ENCODE measurements at regions of chr20 and their contacts with region 1.

Region 1: GRCh38 chr20:60210779-60211617 is 252.8 kb downstream of the CDH26 start:
- DNase-seq: peak; percentile 49
- H3K4me3 ChIP-seq: no peak overlapping the region
- H3K27ac ChIP-seq: no peak overlapping the region
- H3K4me1 ChIP-seq: no peaks in the 10 kb centered on the region
- H3K27me3 ChIP-seq: no peaks in the 10 kb centered on the region
- CTCF ChIP-seq: peak; percentile 74

Region 2: GRCh38 chr20:60362531-60363170 is 151.7 kb after region 1 on chr20:
- intact Hi-C with region 1: loop called (anchors 5 kb)
- DNase-seq: no peak
- H3K4me3 ChIP-seq: no peak overlapping the region
- H3K27ac ChIP-seq: no peak overlapping the region
- H3K4me1 ChIP-seq: no peaks in the 10 kb centered on the region
- H3K27me3 ChIP-seq: no peaks in the 10 kb centered on the region
- CTCF ChIP-seq: no peak

Region 3: DNA sequence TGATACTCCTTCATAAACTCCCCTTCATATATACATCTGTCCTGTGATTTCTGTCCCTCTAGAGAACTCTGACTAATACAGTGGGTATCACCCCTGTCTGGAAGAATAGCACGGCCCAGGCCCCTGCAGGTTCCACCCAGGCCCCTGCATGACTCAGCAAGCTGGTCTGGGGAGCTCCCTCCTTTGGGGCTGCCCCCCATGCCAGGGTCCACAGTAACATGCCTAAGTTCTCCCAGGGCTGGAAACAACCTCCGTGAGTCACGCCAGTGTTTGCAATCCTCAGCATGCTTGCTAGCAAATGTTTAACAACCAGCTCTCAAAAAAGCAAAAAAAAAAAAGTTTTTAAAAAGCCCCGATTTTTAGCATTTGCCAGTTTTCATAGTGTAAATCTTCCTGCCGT is 906.7 kb after region 1 on chr20:
- intact Hi-C with region 1: loop called (anchors 10 kb)
- DNase-seq: no peak
- H3K4me3 ChIP-seq: no peak overlapping the region
- H3K27ac ChIP-seq: no peak overlapping the region
- H3K4me1 ChIP-seq: no peaks in the 10 kb centered on the region
- H3K27me3 ChIP-seq: no peaks in the 10 kb centered on the region
- CTCF ChIP-seq: no peak

Region 4: GRCh38 chr20:61220160-61220559 is 1009.2 kb after region 1 on chr20:
- intact Hi-C with region 1: loop called (anchors 10 kb)
- DNase-seq: peak; percentile 29
- H3K4me3 ChIP-seq: no peak overlapping the region
- H3K27ac ChIP-seq: no peak overlapping the region
- H3K4me1 ChIP-seq: no peaks in the 10 kb centered on the region
- H3K27me3 ChIP-seq: no peaks in the 10 kb centered on the region
- CTCF ChIP-seq: no peak